ENCODE measurements at regions of chr14 and their contacts with region 1.

Region 1: GRCh38 chr14:31926123-31926522 is 151.0 kb upstream of the ARHGAP5 start:
- DNase-seq: peak in 3 of 9 experiments; percentile 21 to 59 (median 41)
- ATAC-seq: peak; percentile 48
- H3K4me3 ChIP-seq: no peak overlapping the region
- H3K4me3 Mint-ChIP-seq: no peak overlapping the region
- H3K27ac ChIP-seq: no peak overlapping the region
- H3K27ac Mint-ChIP-seq: no peak overlapping the region
- H3K4me1 ChIP-seq: no peaks in the 10 kb centered on the region
- H3K4me1 Mint-ChIP-seq: no peaks in the 10 kb centered on the region
- H3K27me3 ChIP-seq: no peaks in the 10 kb centered on the region
- H3K27me3 Mint-ChIP-seq: no peaks in the 10 kb centered on the region
- CTCF ChIP-seq: peak; percentile 57

Region 2: DNA sequence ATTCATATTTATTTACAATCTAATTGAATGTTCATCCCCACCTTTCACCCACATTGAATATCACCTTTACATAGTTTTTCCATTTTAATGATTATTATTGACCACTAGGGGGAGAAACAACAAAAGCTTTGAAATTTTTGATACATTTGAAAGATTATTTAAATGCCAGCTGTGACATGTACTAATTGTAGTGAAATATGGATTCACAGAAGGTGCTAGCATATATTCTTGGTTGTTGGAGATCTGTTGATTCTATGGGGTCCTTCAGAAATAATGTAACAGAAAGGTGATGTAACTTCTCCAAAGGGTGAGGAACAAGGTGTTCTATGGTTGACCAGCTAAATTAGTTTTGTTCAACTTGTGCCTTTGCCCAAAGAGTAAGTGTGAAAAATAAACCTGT is 415.9 kb before region 1 on chr14:
- CTCF ChIA-PET with region 1: no interaction called
- POLR2A ChIA-PET with region 1: no interaction called
- intact Hi-C with region 1: loop called in 1 of 2 experiments (anchors 5 kb)
- DNase-seq: peak in 2 of 9 experiments; percentile 17 to 34
- ATAC-seq: no peak
- H3K4me3 ChIP-seq: no peak overlapping the region
- H3K4me3 Mint-ChIP-seq: no peak overlapping the region
- H3K27ac ChIP-seq: no peak overlapping the region
- H3K27ac Mint-ChIP-seq: no peak overlapping the region
- H3K4me1 ChIP-seq: no peaks in the 10 kb centered on the region
- H3K4me1 Mint-ChIP-seq: no peaks in the 10 kb centered on the region
- H3K27me3 ChIP-seq: no peaks in the 10 kb centered on the region
- H3K27me3 Mint-ChIP-seq: no peaks in the 10 kb centered on the region
- CTCF ChIP-seq: peak; percentile 77

Region 3: GRCh38 chr14:32028599-32028998 is 102.5 kb after region 1 on chr14:
- CTCF ChIA-PET with region 1: no interaction called
- POLR2A ChIA-PET with region 1: no interaction called
- intact Hi-C with region 1: no loop called
- DNase-seq: no peak
- ATAC-seq: no peak
- H3K4me3 ChIP-seq: no peak overlapping the region
- H3K4me3 Mint-ChIP-seq: no peak overlapping the region
- H3K27ac ChIP-seq: no peak overlapping the region
- H3K27ac Mint-ChIP-seq: no peak overlapping the region
- H3K4me1 ChIP-seq: no peaks in the 10 kb centered on the region
- H3K4me1 Mint-ChIP-seq: no peaks in the 10 kb centered on the region
- H3K27me3 ChIP-seq: peaks cover 0 to 5% of the 10 kb centered on the region in 2 experiments
- H3K27me3 Mint-ChIP-seq: peaks cover 13% of the 10 kb centered on the region
- CTCF ChIP-seq: no peak

Region 4: DNA sequence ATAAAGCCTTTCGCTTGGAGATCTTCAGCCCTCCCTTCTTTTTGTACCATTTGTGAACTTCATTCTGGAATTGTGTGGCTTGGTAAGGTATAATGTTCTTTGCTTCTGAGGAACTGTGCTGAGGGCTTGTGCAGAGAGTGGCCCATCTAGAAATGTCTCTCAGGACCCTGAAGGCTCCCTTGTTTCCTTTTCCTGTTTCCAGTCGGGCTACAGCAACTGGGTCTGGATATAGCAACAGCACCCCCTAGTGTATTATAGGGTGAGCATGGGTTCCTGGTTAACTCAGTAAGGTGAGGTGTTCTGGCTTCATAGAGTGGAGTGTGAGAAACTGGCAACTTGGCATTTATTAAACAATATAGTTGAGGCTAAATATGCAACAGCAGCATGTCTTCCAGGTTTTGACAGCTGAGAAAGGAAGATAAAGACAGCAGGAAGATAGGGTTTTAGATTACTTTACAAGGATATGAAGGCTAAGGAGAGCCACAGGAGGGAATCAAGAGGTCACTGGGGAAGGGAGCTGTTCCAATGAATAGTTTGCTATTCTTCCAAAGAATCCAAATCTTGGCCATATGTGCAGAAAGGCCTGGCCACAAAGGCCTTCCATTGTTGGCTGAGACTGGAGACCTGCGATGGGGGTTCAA is 326.0 kb after region 1 on chr14:
- CTCF ChIA-PET with region 1: interaction called, 39 read pairs
- POLR2A ChIA-PET with region 1: no interaction called
- intact Hi-C with region 1: loop called (anchors 1 kb)
- DNase-seq: peak in 8 of 9 experiments; percentile 3 to 78 (median 46)
- ATAC-seq: peak; percentile 90
- H3K4me3 ChIP-seq: no peak overlapping the region
- H3K4me3 Mint-ChIP-seq: no peak overlapping the region
- H3K27ac ChIP-seq: no peak overlapping the region
- H3K27ac Mint-ChIP-seq: no peak overlapping the region
- H3K4me1 ChIP-seq: no peaks in the 10 kb centered on the region
- H3K4me1 Mint-ChIP-seq: no peaks in the 10 kb centered on the region
- H3K27me3 ChIP-seq: no peaks in the 10 kb centered on the region
- H3K27me3 Mint-ChIP-seq: no peaks in the 10 kb centered on the region
- CTCF ChIP-seq: peak; percentile 87

Region 5: GRCh38 chr14:32259368-32260013 is 333.4 kb after region 1 on chr14:
- CTCF ChIA-PET with region 1: interaction called, 39 read pairs
- POLR2A ChIA-PET with region 1: no interaction called
- intact Hi-C with region 1: loop called in 1 of 2 experiments (anchors 1 kb)
- DNase-seq: no peak
- ATAC-seq: no peak
- H3K4me3 ChIP-seq: no peak overlapping the region
- H3K4me3 Mint-ChIP-seq: no peak overlapping the region
- H3K27ac ChIP-seq: no peak overlapping the region
- H3K27ac Mint-ChIP-seq: no peak overlapping the region
- H3K4me1 ChIP-seq: no peaks in the 10 kb centered on the region
- H3K4me1 Mint-ChIP-seq: peaks cover 6% of the 10 kb centered on the region
- H3K27me3 ChIP-seq: no peaks in the 10 kb centered on the region
- H3K27me3 Mint-ChIP-seq: no peaks in the 10 kb centered on the region
- CTCF ChIP-seq: no peak

Region 6: GRCh38 chr14:32560209-32560857 is 634.2 kb after region 1 on chr14:
- CTCF ChIA-PET with region 1: no interaction called
- POLR2A ChIA-PET with region 1: no interaction called
- intact Hi-C with region 1: loop called (anchors 5 to 10 kb)
- DNase-seq: peak in 3 of 9 experiments; percentile 0 to 37 (median 18)
- ATAC-seq: no peak
- H3K4me3 ChIP-seq: no peak overlapping the region
- H3K4me3 Mint-ChIP-seq: no peak overlapping the region
- H3K27ac ChIP-seq: no peak overlapping the region
- H3K27ac Mint-ChIP-seq: no peak overlapping the region
- H3K4me1 ChIP-seq: no peaks in the 10 kb centered on the region
- H3K4me1 Mint-ChIP-seq: peaks cover 12% of the 10 kb centered on the region
- H3K27me3 ChIP-seq: no peaks in the 10 kb centered on the region
- H3K27me3 Mint-ChIP-seq: no peaks in the 10 kb centered on the region
- CTCF ChIP-seq: peak; percentile 50

Region 7: GRCh38 chr14:32724867-32725471 is 798.8 kb after region 1 on chr14:
- CTCF ChIA-PET with region 1: no interaction called
- POLR2A ChIA-PET with region 1: no interaction called
- intact Hi-C with region 1: no loop called
- DNase-seq: no peak
- ATAC-seq: no peak
- H3K4me3 ChIP-seq: no peak overlapping the region
- H3K4me3 Mint-ChIP-seq: no peak overlapping the region
- H3K27ac ChIP-seq: no peak overlapping the region
- H3K27ac Mint-ChIP-seq: no peak overlapping the region
- H3K4me1 ChIP-seq: no peaks in the 10 kb centered on the region
- H3K4me1 Mint-ChIP-seq: no peaks in the 10 kb centered on the region
- H3K27me3 ChIP-seq: no peaks in the 10 kb centered on the region
- H3K27me3 Mint-ChIP-seq: no peaks in the 10 kb centered on the region
- CTCF ChIP-seq: no peak

Measured in CD8-positive, alpha-beta T cell (primary cell).